Activated CD8-positive, alpha-beta T cell treated with anti-CD3 and anti-CD28 coated beads for 36 hours (primary cell): ENCODE measurements at regions of chr7 and their contacts with region 1.

Region 1: GRCh38 chr7:107150375-107151073 is 18.3 kb upstream of the HBP1 start:
- DNase-seq: peak; percentile 91
- ATAC-seq: peak; percentile 67
- H3K4me3 Mint-ChIP-seq: no peak overlapping the region
- H3K27ac Mint-ChIP-seq: no peak overlapping the region
- H3K4me1 Mint-ChIP-seq: peaks cover 4% of the 10 kb centered on the region
- H3K27me3 Mint-ChIP-seq: no peaks in the 10 kb centered on the region
- CTCF ChIP-seq: peak; percentile 80

Region 2: DNA sequence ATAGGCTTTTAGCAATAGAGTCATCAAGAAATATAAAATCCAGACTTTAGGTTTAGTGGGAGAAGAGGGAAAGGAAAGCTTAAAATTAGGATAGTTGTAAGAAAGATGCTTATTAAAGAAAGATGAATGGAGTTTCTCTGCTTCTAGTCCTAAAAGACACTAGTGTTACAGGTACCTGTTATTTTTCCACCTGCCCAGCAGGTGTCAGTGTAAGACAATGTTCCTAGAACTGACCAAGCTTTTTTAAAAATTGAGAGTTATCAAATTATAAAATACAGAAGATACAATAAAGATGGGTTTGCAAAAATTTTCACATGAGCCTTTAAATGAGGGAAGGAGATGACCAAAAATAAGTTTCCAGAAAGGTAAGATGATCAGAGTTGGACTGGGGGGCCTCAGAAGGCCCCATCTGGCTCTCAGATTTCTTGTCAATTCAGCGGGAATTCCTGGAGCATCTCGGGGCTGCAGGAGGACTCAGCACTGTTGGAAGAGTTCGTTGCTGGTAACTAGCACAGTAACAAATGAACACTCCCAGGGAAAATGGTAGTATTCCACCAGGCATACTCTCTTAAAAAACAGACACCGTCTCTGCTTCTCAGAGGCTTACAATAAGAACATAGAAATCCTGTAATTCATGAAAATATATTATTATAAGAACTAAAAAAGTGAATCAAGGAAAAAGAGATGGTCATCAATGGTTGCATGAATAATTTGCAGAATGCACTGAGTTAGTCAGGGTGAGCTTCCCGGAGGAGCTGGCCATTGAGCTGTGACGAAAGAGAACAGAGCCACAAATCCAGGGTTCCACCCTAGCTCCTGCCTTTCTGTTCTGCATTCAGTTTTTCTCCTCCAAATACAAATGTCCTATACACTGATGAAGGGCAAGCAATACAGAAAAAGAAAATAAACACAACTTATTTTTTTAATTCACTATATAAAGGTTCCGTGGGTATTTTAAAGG is 357.2 kb before region 1 on chr7:
- CTCF ChIA-PET with region 1: interaction called, 76 read pairs
- POLR2A ChIA-PET with region 1: no interaction called
- intact Hi-C with region 1: loop called (anchors 1 kb)
- DNase-seq: no peak
- ATAC-seq: peak; percentile 68
- H3K4me3 Mint-ChIP-seq: no peak overlapping the region
- H3K27ac Mint-ChIP-seq: no peak overlapping the region
- H3K4me1 Mint-ChIP-seq: no peaks in the 10 kb centered on the region
- H3K27me3 Mint-ChIP-seq: peaks cover 1% of the 10 kb centered on the region
- CTCF ChIP-seq: peak; percentile 84

Region 3: GRCh38 chr7:106947244-106947728 is 203.2 kb before region 1 on chr7:
- CTCF ChIA-PET with region 1: interaction called, 28 read pairs
- POLR2A ChIA-PET with region 1: no interaction called
- intact Hi-C with region 1: loop called (anchors 5 kb)
- DNase-seq: peak; percentile 58
- ATAC-seq: peak; percentile 85
- H3K4me3 Mint-ChIP-seq: no peak overlapping the region
- H3K27ac Mint-ChIP-seq: no peak overlapping the region
- H3K4me1 Mint-ChIP-seq: no peaks in the 10 kb centered on the region
- H3K27me3 Mint-ChIP-seq: no peaks in the 10 kb centered on the region
- CTCF ChIP-seq: peak; percentile 61

Region 4: GRCh38 chr7:107125458-107125857 is 25.1 kb before region 1 on chr7:
- CTCF ChIA-PET with region 1: interaction called, 51 read pairs
- POLR2A ChIA-PET with region 1: no interaction called
- intact Hi-C with region 1: no loop called
- DNase-seq: no peak
- ATAC-seq: no peak
- H3K4me3 Mint-ChIP-seq: peak overlapping the region; percentile 64
- H3K27ac Mint-ChIP-seq: peak overlapping the region; percentile 83
- H3K4me1 Mint-ChIP-seq: peaks cover 14% of the 10 kb centered on the region
- H3K27me3 Mint-ChIP-seq: no peaks in the 10 kb centered on the region
- CTCF ChIP-seq: no peak

Region 5: DNA sequence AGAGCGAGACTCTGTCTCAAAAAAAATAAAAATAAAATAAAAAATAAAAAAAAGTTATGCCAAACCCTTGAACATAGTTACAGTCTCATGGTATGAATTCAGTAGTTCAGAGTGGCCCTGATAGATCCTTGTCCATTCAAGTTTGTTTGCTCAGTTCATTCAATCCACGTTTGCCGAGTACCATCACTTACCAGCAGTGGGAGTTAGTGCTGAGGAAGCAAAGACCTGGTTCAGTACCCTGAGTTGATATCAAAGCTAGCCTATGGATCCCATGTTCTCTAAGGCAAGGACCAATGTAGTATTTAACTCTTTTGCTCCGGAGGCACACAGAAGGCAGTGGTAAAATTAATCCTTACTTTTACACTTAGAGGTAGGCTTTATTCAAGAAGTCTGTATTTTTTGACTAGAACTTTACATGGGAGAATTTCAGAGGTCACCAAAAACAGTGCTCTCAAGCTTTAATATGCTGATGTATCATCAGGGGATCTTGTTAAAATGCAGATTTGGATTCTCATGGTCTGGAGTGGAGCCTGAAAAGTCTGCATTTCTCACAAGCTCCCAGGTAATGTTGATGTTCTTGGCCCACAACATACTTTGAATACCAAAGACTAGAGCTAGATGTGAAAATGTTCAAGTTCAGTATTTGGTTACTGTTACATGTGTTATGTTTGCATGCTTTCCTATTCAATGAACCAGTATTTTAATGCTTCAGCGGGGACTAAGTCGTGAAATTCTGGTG is 19.9 kb before region 1 on chr7:
- CTCF ChIA-PET with region 1: interaction called, 51 read pairs
- POLR2A ChIA-PET with region 1: no interaction called
- intact Hi-C with region 1: no loop called
- DNase-seq: no peak
- ATAC-seq: no peak
- H3K4me3 Mint-ChIP-seq: no peak overlapping the region
- H3K27ac Mint-ChIP-seq: no peak overlapping the region
- H3K4me1 Mint-ChIP-seq: peaks cover 9% of the 10 kb centered on the region
- H3K27me3 Mint-ChIP-seq: no peaks in the 10 kb centered on the region
- CTCF ChIP-seq: no peak

Region 6: GRCh38 chr7:107138696-107139420 is 11.7 kb before region 1 on chr7:
- CTCF ChIA-PET with region 1: interaction called, 51 read pairs
- POLR2A ChIA-PET with region 1: no interaction called
- intact Hi-C with region 1: no loop called
- DNase-seq: no peak
- ATAC-seq: no peak
- H3K4me3 Mint-ChIP-seq: no peak overlapping the region
- H3K27ac Mint-ChIP-seq: no peak overlapping the region
- H3K4me1 Mint-ChIP-seq: no peaks in the 10 kb centered on the region
- H3K27me3 Mint-ChIP-seq: no peaks in the 10 kb centered on the region
- CTCF ChIP-seq: no peak